ENCODE measurements at regions of chr19 and their contacts with region 1.

Region 1: GRCh38 chr19:24086974-24087595 is at the start of gene ZNF254:
- DNase-seq: peak; percentile 94
- ATAC-seq: peak; percentile 100
- H3K4me3 Mint-ChIP-seq: peak within 1 kb of the TSS; percentile 97
- H3K27ac Mint-ChIP-seq: peak within 1 kb of the TSS; percentile 99
- H3K4me1 Mint-ChIP-seq: peaks cover 5% of the 10 kb centered on the region
- H3K27me3 Mint-ChIP-seq: no peaks in the 10 kb centered on the region
- total RNA-seq, gene ZNF254: 13.0 to 13.1 TPM

Region 2: GRCh38 chr19:24033301-24033962 is 53.7 kb before region 1 on chr19:
- CTCF ChIA-PET with region 1: interaction called, 5 read pairs
- POLR2A ChIA-PET with region 1: interaction called, 39 read pairs
- DNase-seq: peak; percentile 88
- ATAC-seq: peak; percentile 99
- H3K4me3 Mint-ChIP-seq: peak overlapping the region; percentile 99
- H3K27ac Mint-ChIP-seq: peak overlapping the region; percentile 98
- H3K4me1 Mint-ChIP-seq: peaks cover 21% of the 10 kb centered on the region
- H3K27me3 Mint-ChIP-seq: no peaks in the 10 kb centered on the region

Region 3: DNA sequence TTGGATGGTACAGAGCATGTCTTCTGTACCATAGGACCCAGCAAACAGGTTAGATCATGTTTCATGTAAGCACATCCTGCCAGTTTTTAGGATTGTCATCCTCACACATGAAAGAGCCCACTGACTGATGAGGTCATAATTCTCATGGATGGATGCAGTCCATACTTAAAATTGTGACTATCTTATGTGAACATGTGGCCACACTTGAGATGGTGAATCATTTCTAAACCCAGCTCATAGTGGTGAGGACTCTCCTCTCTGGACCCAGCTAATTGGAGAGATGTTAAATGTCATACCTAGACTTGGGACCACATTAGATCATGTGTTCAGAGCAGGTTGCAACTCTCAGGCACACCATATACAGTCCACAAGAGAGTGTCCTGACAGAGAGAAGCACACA is 24.9 kb before region 1 on chr19:
- CTCF ChIA-PET with region 1: no interaction called
- POLR2A ChIA-PET with region 1: no interaction called
- DNase-seq: no peak
- ATAC-seq: no peak
- H3K4me3 Mint-ChIP-seq: no peak overlapping the region
- H3K27ac Mint-ChIP-seq: no peak overlapping the region
- H3K4me1 Mint-ChIP-seq: peaks cover 3% of the 10 kb centered on the region
- H3K27me3 Mint-ChIP-seq: no peaks in the 10 kb centered on the region

Region 4: DNA sequence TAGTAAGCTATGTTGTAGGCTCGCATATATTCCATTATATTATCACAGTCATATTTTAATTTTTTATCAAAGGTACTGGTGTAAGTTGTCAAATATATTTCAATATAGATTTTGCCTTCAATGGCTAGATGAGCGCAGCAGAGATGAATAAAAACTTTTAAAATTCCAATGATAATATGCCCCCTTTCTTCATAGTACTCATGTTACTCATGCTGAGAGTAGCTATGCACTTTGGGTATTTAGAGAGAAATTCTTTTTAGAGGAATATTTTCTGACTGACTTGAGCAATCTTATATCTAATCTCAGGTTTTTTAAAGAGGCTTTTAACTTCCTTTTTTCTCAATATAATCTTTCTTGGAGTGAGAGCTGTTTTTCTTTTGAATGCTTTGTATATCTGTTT is 11.3 kb after region 1 on chr19:
- CTCF ChIA-PET with region 1: no interaction called
- POLR2A ChIA-PET with region 1: interaction called, 10 read pairs
- DNase-seq: no peak
- ATAC-seq: no peak
- H3K4me3 Mint-ChIP-seq: no peak overlapping the region
- H3K27ac Mint-ChIP-seq: no peak overlapping the region
- H3K4me1 Mint-ChIP-seq: peaks cover 11% of the 10 kb centered on the region
- H3K27me3 Mint-ChIP-seq: no peaks in the 10 kb centered on the region